Activated CD8-positive, alpha-beta T cell treated with anti-CD3 and anti-CD28 coated beads, Interleukin-2, amount 10 ng/mL, durations not matched to agents 7 days and 5 days (primary cell): ENCODE measurements at regions of chrX and their contacts with region 1.

Region 1: DNA sequence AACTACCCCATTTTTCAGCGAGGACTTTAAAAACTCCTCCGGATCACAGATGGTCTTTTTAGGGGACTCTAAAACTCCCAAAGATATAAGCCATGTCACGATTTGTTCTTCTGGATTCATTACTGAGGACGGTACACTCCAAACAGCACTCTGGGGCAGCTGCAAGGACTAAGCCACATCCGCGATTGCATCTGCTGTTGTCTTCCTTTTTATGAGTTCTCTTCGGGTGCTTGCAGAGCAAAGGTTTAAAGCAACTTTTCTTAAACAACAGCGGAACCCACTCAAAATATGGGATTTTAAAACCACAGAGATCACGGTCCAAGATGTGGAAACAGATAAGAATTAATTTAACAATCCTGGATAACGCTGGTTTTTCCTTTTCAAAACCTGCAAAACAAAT is at the start of gene ARHGEF6:
- DNase-seq: peak; percentile 65
- ATAC-seq: peak; percentile 72
- H3K4me3 Mint-ChIP-seq: peak within 1 kb of the TSS; percentile 85
- H3K27ac Mint-ChIP-seq: peak within 1 kb of the TSS; percentile 92
- H3K4me1 Mint-ChIP-seq: peaks cover 55% of the 10 kb centered on the region
- H3K27me3 Mint-ChIP-seq: no peaks in the 10 kb centered on the region
- total RNA-seq, gene ARHGEF6: 97.8 to 99.0 TPM

Region 2: GRCh38 chrX:136810493-136810892 is 29.7 kb after region 1 on chrX:
- CTCF ChIA-PET with region 1: interaction called, 5 read pairs
- POLR2A ChIA-PET with region 1: interaction called, 19 read pairs
- DNase-seq: peak; percentile 36
- ATAC-seq: peak; percentile 79
- H3K4me3 Mint-ChIP-seq: peak overlapping the region; percentile 44
- H3K27ac Mint-ChIP-seq: peak overlapping the region; percentile 81
- H3K4me1 Mint-ChIP-seq: peaks cover 30% of the 10 kb centered on the region
- H3K27me3 Mint-ChIP-seq: no peaks in the 10 kb centered on the region

Region 3: DNA sequence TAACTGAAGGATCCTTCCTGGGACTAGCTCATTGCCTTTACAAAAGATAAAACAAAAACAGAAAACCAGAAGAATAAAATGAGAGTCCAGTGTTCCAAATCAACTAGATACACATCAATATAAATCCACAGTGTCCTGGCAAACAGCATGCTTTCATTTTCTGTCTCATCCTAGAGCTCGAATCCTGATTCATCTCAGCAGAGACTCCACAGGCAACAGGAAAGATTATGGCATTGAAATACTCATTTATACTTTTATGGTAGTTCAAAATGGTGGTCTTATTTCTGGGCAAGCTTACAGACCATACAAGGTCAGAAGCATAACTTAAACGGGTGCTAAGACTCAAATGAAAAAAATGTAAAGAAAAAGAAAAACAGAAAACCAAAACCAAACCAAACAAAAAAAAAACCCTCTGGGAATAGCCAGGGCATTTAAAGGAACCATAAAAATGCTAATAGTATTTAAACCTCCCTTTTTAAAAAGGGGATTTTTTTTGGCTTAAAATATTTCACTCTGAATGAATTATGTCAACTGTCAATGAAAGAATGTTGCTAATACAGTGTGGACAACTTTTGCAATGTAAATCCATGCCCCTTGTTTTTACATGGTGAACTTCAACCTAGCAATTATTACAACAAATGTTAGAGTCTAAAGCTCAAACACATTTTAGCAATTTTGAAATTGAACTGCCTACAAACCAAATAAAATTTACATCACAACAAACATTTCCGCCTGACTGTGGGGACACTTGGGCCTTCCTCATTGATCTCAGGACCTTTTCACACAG is 195.1 kb after region 1 on chrX:
- CTCF ChIA-PET with region 1: no interaction called
- POLR2A ChIA-PET with region 1: no interaction called
- DNase-seq: no peak
- ATAC-seq: no peak
- H3K4me3 Mint-ChIP-seq: no peak overlapping the region
- H3K27ac Mint-ChIP-seq: no peak overlapping the region
- H3K4me1 Mint-ChIP-seq: no peaks in the 10 kb centered on the region
- H3K27me3 Mint-ChIP-seq: no peaks in the 10 kb centered on the region